ENCODE measurements at regions of chr11 and their contacts with region 1.

Region 1: DNA sequence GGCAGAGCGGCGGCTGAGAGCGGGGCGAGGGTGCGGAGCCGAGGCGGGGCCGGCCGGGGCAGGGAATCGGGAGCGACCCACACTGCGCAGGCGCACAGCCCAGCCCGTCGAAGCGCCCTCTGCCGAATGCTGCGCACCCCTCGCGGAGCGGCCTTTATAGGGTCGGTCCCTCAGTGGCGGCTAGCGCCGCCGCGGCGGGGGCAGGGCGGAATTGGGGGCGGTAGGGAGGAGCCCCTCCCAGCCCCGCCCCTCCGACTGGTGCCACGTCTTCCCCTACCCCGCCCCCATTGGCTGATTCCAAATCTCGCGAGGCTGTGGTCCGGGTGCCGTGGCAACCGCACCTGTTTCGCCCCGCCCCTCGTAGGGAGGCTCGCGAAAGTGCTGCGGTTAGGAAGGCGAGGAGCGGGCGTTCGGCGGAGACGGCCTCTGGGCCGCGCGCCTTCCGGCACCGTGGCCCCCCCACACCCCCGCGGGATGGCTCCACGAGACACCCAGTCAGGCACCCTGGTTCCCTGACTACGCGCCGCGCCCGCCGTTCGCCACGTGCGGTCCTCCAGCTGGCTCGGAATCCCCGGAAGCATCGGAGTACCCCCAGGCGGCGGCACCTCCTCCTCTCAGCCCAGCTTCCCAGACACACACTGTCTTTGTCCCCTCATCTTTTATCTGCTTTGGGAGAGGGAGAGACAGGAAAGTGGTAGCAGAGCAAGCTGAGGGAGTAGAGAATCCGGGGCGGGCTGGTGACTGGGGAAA is at the start of gene EHD1:
- DNase-seq: peak; percentile 97 to 98 (median 98)
- H3K4me3 ChIP-seq: peak within 1 kb of the TSS; percentile 72 to 95 (median 90)
- H3K27ac ChIP-seq: peak within 1 kb of the TSS; percentile 64 to 92
- H3K4me1 ChIP-seq: peaks cover 18 to 54% (median 51%) of the 10 kb centered on the region in 4 experiments
- H3K27me3 ChIP-seq: no peaks in the 10 kb centered on the region

Region 2: GRCh38 chr11:64500176-64501013 is 378.3 kb before region 1 on chr11:
- CTCF ChIA-PET with region 1: no interaction called
- POLR2A ChIA-PET with region 1: no interaction called
- DNase-seq: peak in 1 of 3 donors; percentile 16
- H3K4me3 ChIP-seq: no peak overlapping the region
- H3K27ac ChIP-seq: no peak overlapping the region
- H3K4me1 ChIP-seq: peaks cover 0 to 34% (median 28%) of the 10 kb centered on the region in 4 experiments
- H3K27me3 ChIP-seq: no peaks in the 10 kb centered on the region

Region 3: GRCh38 chr11:64894070-64894796 is 15.6 kb after region 1 on chr11:
- CTCF ChIA-PET with region 1: interaction called, 31 read pairs
- POLR2A ChIA-PET with region 1: interaction called, 5 read pairs
- DNase-seq: peak; percentile 81 to 88 (median 84)
- H3K4me3 ChIP-seq: no peak overlapping the region
- H3K27ac ChIP-seq: no peak overlapping the region
- H3K4me1 ChIP-seq: peaks cover 0 to 22% (median 11%) of the 10 kb centered on the region in 4 experiments
- H3K27me3 ChIP-seq: no peaks in the 10 kb centered on the region

Measured in common myeloid progenitor, CD34-positive (primary cell).